GM13977 (cell line): ENCODE measurements at regions of chrX and their contacts with region 1.

Region 1: DNA sequence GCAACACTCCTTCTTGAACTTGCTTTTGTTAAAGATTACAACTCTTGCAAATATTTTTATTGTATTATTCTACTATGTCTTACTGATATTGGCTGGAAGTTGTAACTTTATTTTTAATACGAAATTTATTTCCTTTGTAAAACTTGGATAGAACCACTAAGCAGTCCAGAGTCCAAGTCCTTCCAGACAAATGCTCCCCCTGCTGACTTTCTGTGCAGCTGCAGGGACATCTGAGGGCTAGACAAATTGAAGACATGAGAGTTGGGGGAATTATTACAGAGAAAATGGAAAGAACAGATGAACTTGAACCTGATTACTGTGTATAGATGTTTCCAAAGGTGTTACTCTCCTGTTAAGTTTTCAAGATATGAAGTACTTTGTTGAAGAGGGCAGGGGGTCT is 238.8 kb downstream of the GRIA3 start:
- DNase-seq: peak; percentile 4
- CTCF ChIP-seq: peak; percentile 74

Region 2: DNA sequence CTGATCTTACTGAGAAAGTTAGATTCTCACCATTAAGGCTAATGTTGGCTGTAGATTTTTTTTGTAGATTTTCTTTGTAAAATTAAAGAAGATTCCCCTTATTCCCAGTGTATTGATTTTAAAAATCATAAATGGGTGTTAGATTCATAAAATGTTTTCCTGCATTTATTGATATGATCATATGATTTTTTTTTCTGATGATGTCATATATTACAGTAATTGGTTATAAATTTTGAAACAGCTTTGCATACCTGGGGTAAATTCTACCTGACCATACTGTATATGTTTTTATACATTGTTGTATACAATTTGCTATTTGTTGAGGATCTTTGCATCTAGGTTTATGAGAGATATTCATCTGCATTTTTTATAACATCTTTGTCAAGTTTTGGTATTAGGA is 1119.1 kb before region 1 on chrX:
- in situ Hi-C with region 1: no loop called
- DNase-seq: no peak
- CTCF ChIP-seq: no peak

Region 3: DNA sequence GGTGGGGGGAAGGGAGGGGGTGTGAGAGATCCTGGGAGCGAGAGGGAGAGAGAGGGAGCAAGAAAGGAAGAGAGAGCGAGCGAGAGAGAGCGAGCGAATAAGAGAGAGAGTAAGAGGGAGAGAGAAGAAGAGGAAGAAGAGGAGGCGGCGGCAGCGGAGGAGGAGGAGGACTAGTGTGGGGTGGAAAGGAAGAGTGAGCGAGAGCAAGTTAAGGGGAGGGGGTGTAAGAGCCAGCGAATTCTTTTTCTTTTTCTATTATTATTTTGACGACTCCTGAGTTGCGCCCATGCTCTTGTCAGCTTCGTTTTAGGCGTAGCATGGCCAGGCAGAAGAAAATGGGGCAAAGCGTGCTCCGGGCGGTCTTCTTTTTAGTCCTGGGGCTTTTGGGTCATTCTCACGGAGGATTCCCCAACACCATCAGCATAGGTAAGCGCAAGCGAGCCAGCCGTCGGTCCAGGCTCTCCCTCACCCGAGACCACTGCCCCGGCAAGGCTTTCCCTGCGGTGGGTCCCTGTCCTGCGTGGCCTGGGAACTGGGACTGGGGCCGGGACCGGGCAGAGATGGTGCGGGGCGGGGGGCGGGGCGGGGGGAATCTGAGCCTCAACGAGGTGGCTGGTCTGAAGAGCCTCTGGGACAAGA is 238.5 kb before region 1 on chrX and contains the start of gene GRIA3:
- in situ Hi-C with region 1: loop called (anchors 25 kb)
- DNase-seq: no peak
- CTCF ChIP-seq: no peak